ENCODE measurements at regions of chr1 and their contacts with region 1.

Region 1: DNA sequence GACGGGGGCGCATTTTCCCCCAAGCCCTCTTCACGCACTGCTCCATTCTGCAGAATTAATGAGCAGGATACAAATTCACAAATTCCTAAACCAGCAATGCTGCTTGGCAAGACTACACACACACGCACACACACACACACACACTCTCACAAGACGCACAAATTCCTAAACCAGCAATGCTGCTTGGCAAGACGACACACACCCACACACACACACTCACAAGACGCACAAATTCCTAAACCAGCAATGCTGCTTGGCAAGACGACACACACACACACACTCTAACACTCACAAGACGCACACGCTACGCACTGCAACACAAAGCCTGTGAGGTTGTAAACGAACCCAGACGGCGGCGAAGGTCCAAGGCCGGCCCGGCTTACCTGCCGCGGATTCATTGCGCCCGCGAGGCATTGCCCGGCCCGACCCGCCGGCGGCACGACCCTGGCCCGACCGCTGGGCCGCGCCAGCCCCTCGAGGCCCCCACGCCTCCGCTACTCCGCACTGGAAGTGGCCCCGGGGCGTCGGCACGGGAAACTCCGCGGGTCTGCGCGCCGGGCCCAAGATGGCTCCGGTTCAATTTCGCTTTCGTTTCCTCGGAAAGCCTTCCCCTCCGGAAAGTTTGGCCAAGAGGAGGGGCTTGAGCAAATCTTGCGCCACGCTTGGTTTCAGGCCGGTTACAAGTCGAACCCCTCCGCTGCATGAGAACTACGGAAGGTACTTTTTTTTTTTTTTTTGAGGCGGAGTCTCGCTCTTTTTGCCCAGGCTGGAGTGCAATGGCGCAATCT is at the start of gene ADAR:
- DNase-seq: peak; percentile 67 to 95 (median 90)
- ATAC-seq: peak; percentile 92
- H3K4me3 ChIP-seq: peak within 1 kb of the TSS; percentile 78
- H3K4me3 Mint-ChIP-seq: peak within 1 kb of the TSS; percentile 91 to 100 (median 98)
- H3K27ac ChIP-seq: peak within 1 kb of the TSS; percentile 97
- H3K27ac Mint-ChIP-seq: peak within 1 kb of the TSS; percentile 94 to 99 (median 99)
- H3K4me1 ChIP-seq: peaks cover 40 to 42% of the 10 kb centered on the region in 2 donors
- H3K4me1 Mint-ChIP-seq: peaks cover 63 to 90% (median 75%) of the 10 kb centered on the region in 7 donors
- H3K27me3 ChIP-seq: no peaks in the 10 kb centered on the region
- H3K27me3 Mint-ChIP-seq: no peaks in the 10 kb centered on the region
- total RNA-seq, gene ADAR: 206 to 408 (median 237) TPM

Region 2: DNA sequence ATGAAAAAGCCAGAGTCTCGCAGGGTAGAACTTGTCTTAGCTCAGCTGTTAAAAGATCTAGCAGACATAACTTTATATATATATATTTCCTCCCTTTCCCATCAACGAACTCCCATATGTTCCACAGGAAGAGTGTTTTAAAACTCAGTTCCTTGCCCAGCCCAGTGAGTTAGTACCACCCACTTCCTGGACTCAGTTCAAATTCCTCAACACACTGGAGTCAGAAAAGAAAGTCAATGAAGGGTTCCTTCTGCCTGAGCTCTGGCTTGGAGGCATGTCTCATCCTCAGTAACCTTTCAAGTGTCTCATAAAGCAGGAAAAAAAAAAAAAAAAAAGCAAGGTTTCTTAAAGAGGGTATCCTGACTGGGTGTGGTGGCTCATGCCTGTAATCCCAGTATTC is 431.5 kb before region 1 on chr1:
- CTCF ChIA-PET with region 1: no interaction called
- POLR2A ChIA-PET with region 1: no interaction called
- intact Hi-C with region 1: no loop called
- DNase-seq: no peak
- ATAC-seq: no peak
- H3K4me3 ChIP-seq: no peak overlapping the region
- H3K4me3 Mint-ChIP-seq: peak overlapping the region; percentile 10 to 100 (median 62)
- H3K27ac ChIP-seq: peak overlapping the region; percentile 95
- H3K27ac Mint-ChIP-seq: peak overlapping the region; percentile 32 to 99 (median 79)
- H3K4me1 ChIP-seq: peaks cover 47 to 58% of the 10 kb centered on the region in 2 donors
- H3K4me1 Mint-ChIP-seq: peaks cover 58 to 85% (median 73%) of the 10 kb centered on the region in 7 donors
- H3K27me3 ChIP-seq: no peaks in the 10 kb centered on the region
- H3K27me3 Mint-ChIP-seq: no peaks in the 10 kb centered on the region

Region 3: DNA sequence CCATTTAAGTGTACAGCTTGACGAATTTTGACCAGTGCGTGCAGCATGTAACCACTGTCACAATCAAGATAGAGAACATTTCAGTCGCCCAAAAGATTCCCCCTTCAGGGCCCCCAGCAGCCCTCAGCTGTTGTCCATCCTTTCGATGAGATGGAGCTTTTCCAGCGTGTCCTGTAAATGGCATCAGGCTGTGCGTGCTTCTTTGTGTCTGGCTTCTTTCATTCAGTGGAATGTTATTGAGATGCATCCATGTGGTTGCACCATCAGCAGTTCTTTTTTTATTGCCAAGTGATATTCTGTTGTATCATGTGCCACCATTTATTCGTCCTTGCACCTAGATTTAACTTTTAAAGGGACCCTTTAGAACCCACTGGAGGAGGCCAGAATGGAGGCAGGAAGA is 71.2 kb before region 1 on chr1:
- CTCF ChIA-PET with region 1: no interaction called
- POLR2A ChIA-PET with region 1: no interaction called
- intact Hi-C with region 1: no loop called
- DNase-seq: no peak
- ATAC-seq: no peak
- H3K4me3 ChIP-seq: no peak overlapping the region
- H3K4me3 Mint-ChIP-seq: no peak overlapping the region
- H3K27ac ChIP-seq: no peak overlapping the region
- H3K27ac Mint-ChIP-seq: no peak overlapping the region
- H3K4me1 ChIP-seq: no peaks in the 10 kb centered on the region
- H3K4me1 Mint-ChIP-seq: no peaks in the 10 kb centered on the region
- H3K27me3 ChIP-seq: no peaks in the 10 kb centered on the region
- H3K27me3 Mint-ChIP-seq: peaks cover 0 to 33% (median 4%) of the 10 kb centered on the region in 5 donors

Region 4: GRCh38 chr1:154760469-154760933 is 152.7 kb after region 1 on chr1:
- CTCF ChIA-PET with region 1: no interaction called
- POLR2A ChIA-PET with region 1: no interaction called
- intact Hi-C with region 1: loop called in 1 of 2 experiments (anchors 5 kb)
- DNase-seq: peak; percentile 73 to 91 (median 83)
- ATAC-seq: peak; percentile 98
- H3K4me3 ChIP-seq: peak overlapping the region; percentile 47
- H3K4me3 Mint-ChIP-seq: peak overlapping the region; percentile 29 to 79 (median 74)
- H3K27ac ChIP-seq: peak overlapping the region; percentile 59
- H3K27ac Mint-ChIP-seq: peak overlapping the region in 5 of 9 donors; percentile 62 to 97 (median 79)
- H3K4me1 ChIP-seq: peaks cover 8 to 24% of the 10 kb centered on the region in 2 donors
- H3K4me1 Mint-ChIP-seq: peaks cover 24 to 47% (median 40%) of the 10 kb centered on the region in 7 donors
- H3K27me3 ChIP-seq: peaks cover 0 to 8% of the 10 kb centered on the region in 2 donors
- H3K27me3 Mint-ChIP-seq: peaks cover 0 to 23% (median 5%) of the 10 kb centered on the region in 5 donors

Region 5: GRCh38 chr1:154955718-154956543 is 348.1 kb after region 1 on chr1 and contains the start of gene PBXIP1:
- CTCF ChIA-PET with region 1: interaction called, 3 read pairs
- POLR2A ChIA-PET with region 1: interaction called, 7 read pairs
- intact Hi-C with region 1: loop called in 1 of 2 experiments (anchors 5 kb)
- DNase-seq: peak; percentile 56 to 95 (median 92)
- ATAC-seq: peak; percentile 58
- H3K4me3 ChIP-seq: peak within 1 kb of the TSS; percentile 92
- H3K4me3 Mint-ChIP-seq: peak within 1 kb of the TSS; percentile 92 to 99 (median 98)
- H3K27ac ChIP-seq: peak within 1 kb of the TSS; percentile 96
- H3K27ac Mint-ChIP-seq: peak within 1 kb of the TSS; percentile 97 to 100 (median 99)
- H3K4me1 ChIP-seq: peaks cover 53 to 54% of the 10 kb centered on the region in 2 donors
- H3K4me1 Mint-ChIP-seq: peaks cover 59 to 87% (median 76%) of the 10 kb centered on the region in 7 donors
- H3K27me3 ChIP-seq: no peaks in the 10 kb centered on the region
- H3K27me3 Mint-ChIP-seq: no peaks in the 10 kb centered on the region
- total RNA-seq, gene PBXIP1: 107 to 390 (median 383) TPM

Region 6: GRCh38 chr1:155012026-155012546 is 404.3 kb after region 1 on chr1:
- CTCF ChIA-PET with region 1: no interaction called
- POLR2A ChIA-PET with region 1: no interaction called
- intact Hi-C with region 1: loop called (anchors 2 to 5 kb)
- DNase-seq: peak in 1 of 9 donors; percentile 56
- ATAC-seq: peak; percentile 7
- H3K4me3 ChIP-seq: peak overlapping the region; percentile 38
- H3K4me3 Mint-ChIP-seq: peak overlapping the region; percentile 75 to 99 (median 90)
- H3K27ac ChIP-seq: peak overlapping the region; percentile 83
- H3K27ac Mint-ChIP-seq: peak overlapping the region; percentile 80 to 98 (median 95)
- H3K4me1 ChIP-seq: peaks cover 56 to 71% of the 10 kb centered on the region in 2 donors
- H3K4me1 Mint-ChIP-seq: peaks cover 30 to 78% (median 63%) of the 10 kb centered on the region in 7 donors
- H3K27me3 ChIP-seq: no peaks in the 10 kb centered on the region
- H3K27me3 Mint-ChIP-seq: no peaks in the 10 kb centered on the region

Region 7: DNA sequence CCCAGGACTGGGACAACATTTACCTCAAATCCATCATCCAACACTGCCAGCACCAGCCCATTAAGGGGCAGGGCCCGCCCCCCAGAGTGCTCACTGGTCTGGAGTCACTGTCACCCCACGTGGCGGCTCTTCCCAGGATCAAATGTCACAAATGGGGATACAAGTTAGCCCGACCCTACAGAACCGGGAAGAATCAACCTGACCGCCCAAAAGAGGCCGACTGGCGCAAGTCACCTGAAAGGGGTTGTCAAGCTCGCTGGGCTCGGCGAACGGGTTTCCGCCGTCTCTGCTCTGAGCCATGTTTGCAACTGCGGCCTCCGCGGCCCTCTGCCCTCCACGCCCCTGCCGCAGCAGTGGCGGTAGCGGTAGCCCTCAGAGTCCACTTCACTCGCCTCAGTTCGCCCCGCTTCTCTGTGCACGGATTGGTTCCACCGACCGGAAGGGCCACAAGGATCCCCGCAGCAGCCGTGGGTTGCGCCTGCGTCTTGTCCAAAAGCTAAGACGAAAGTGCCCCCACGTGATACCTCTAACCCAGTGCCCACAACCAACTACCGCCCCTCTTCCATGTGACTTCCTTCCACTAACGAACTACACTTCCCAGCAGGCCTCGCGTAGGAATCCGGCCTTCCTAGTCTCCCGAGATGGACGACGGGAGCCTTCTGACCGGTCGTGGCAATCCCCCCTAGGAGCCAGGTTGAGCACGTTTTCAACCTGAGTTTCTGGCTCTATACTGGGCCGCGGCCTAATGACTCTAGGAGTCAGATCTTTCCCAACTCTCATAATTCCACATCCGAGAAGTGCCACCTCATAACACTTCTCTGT is 654.3 kb after region 1 on chr1 and contains the start of gene SCAMP3:
- CTCF ChIA-PET with region 1: no interaction called
- POLR2A ChIA-PET with region 1: no interaction called
- intact Hi-C with region 1: no loop called
- DNase-seq: peak; percentile 52 to 89 (median 79)
- ATAC-seq: peak; percentile 99
- H3K4me3 ChIP-seq: peak within 1 kb of the TSS; percentile 88
- H3K4me3 Mint-ChIP-seq: peak within 1 kb of the TSS; percentile 81 to 100 (median 98)
- H3K27ac ChIP-seq: peak within 1 kb of the TSS; percentile 87
- H3K27ac Mint-ChIP-seq: peak within 1 kb of the TSS; percentile 89 to 98 (median 96)
- H3K4me1 ChIP-seq: peaks cover 18 to 19% of the 10 kb centered on the region in 2 donors
- H3K4me1 Mint-ChIP-seq: peaks cover 22 to 42% (median 33%) of the 10 kb centered on the region in 7 donors
- H3K27me3 ChIP-seq: no peaks in the 10 kb centered on the region
- H3K27me3 Mint-ChIP-seq: no peaks in the 10 kb centered on the region
- total RNA-seq, gene SCAMP3: 50.8 to 118 (median 100) TPM